ENCODE measurements at regions of chr1 and their contacts with region 1.

Region 1: GRCh38 chr1:26284597-26285360 is 4.9 kb downstream of the SH3BGRL3 start:
- DNase-seq: peak; percentile 68 to 75
- ATAC-seq: peak in 6 of 8 donors; percentile 21 to 55 (median 43)
- H3K4me3 ChIP-seq: peak overlapping the region in 1 of 10 donors; percentile 8
- H3K27ac ChIP-seq: peak overlapping the region in 8 of 10 donors; percentile 33 to 98 (median 60)
- H3K4me1 ChIP-seq: peaks cover 3 to 97% (median 55%) of the 10 kb centered on the region in 9 donors
- H3K27me3 ChIP-seq: no peaks in the 10 kb centered on the region
- CTCF ChIP-seq: peak; percentile 51 to 85 (median 78)

Region 2: GRCh38 chr1:26306290-26307229 is 21.8 kb after region 1 on chr1 and contains the start of gene UBXN11:
- intact Hi-C with region 1: loop called in 1 of 10 experiments (anchors 2 kb)
- DNase-seq: peak; percentile 85 to 92
- ATAC-seq: peak; percentile 93 to 98 (median 96)
- H3K4me3 ChIP-seq: peak within 1 kb of the TSS; percentile 56 to 78 (median 64)
- H3K27ac ChIP-seq: peak within 1 kb of the TSS in 8 of 10 donors; percentile 11 to 88 (median 54)
- H3K4me1 ChIP-seq: peaks cover 6 to 64% (median 24%) of the 10 kb centered on the region in 9 donors
- H3K27me3 ChIP-seq: no peaks in the 10 kb centered on the region
- CTCF ChIP-seq: no peak
- total RNA-seq, gene UBXN11: 5.4 to 14.1 (median 7.1) TPM

Measured in heart right ventricle (tissue), 16 donors.